PC-9 (cell line): ENCODE measurements at regions of chr6 and their contacts with region 1.

Region 1: DNA sequence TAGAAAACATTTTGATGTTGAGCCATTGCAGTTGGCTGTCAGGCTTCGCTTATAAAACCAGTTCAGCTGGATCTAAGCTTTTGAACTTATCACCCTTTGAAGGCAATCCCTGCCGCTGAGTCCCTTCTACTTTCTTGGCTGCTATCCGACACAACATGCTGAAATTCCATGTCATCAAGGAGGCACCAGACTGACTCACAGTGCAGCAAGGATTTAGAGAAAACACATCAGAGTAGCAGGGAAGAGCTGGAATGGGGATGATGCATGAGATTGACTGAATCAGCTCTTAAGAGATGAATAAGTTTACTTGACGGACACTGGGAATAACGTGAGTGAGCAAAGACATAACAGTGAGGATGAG is 135.1 kb upstream of the MAN1A1 start:
- DNase-seq: peak; percentile 72 to 99
- H3K4me3 ChIP-seq: no peak overlapping the region
- H3K27ac ChIP-seq: peak overlapping the region; percentile 75
- H3K4me1 ChIP-seq: peaks cover 29% of the 10 kb centered on the region
- H3K27me3 ChIP-seq: no peaks in the 10 kb centered on the region
- CTCF ChIP-seq: no peak

Region 2: DNA sequence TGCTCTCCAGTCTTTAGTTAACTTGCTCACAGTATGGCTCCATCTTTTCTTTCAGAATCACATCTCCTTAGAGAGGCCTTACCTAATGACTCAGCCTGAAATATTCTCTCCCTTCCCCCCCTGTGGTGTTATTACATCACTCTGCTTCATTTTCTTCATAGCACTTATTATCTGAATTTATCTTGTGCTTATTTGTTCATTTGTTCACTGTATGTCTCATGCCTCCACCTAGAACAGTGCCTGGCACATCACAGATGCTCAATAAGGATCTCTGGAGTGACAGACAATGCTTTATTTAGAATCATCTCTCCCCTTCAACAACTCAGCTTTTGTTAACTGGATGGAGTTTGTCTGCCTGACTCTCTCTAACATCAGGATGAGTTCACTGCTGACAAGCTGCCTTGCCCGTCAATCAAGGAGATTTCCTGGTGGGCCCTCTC is 38.5 kb before region 1 on chr6:
- CTCF ChIA-PET with region 1: no interaction called
- POLR2A ChIA-PET with region 1: interaction called, 3 read pairs
- intact Hi-C with region 1: loop called (anchors 2 kb)
- DNase-seq: peak; percentile 9 to 72
- H3K4me3 ChIP-seq: peak overlapping the region; percentile 30; the same call in 1 of the 2 replicates
- H3K27ac ChIP-seq: peak overlapping the region; percentile 96
- H3K4me1 ChIP-seq: peaks cover 46% of the 10 kb centered on the region
- H3K27me3 ChIP-seq: no peaks in the 10 kb centered on the region
- CTCF ChIP-seq: no peak

Region 3: DNA sequence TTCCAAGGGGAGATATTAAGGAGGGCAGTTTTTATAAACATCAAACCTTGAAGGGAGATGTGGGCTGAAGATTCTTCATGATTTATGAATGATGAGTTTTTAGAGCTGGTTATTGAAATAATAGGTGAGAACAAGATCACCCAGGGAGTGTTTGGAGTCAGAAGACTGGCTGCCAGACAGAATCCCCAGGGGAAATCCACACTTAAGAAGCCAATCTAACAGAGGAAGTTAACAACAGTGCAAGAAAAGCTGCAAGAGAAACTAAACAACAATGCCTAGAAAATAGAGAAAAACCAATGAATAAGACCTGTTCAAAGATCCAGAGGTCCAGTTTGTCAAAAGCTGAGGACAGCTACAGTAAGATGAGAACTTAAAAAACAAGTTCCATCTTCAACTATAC is 32.8 kb after region 1 on chr6:
- CTCF ChIA-PET with region 1: no interaction called
- POLR2A ChIA-PET with region 1: no interaction called
- intact Hi-C with region 1: no loop called
- DNase-seq: no peak
- H3K4me3 ChIP-seq: no peak overlapping the region
- H3K27ac ChIP-seq: no peak overlapping the region
- H3K4me1 ChIP-seq: no peaks in the 10 kb centered on the region
- H3K27me3 ChIP-seq: no peaks in the 10 kb centered on the region
- CTCF ChIP-seq: no peak

Region 4: GRCh38 chr6:119575721-119576120 is 91.1 kb after region 1 on chr6:
- CTCF ChIA-PET with region 1: no interaction called
- POLR2A ChIA-PET with region 1: no interaction called
- intact Hi-C with region 1: no loop called
- DNase-seq: no peak
- H3K4me3 ChIP-seq: no peak overlapping the region
- H3K27ac ChIP-seq: no peak overlapping the region
- H3K4me1 ChIP-seq: no peaks in the 10 kb centered on the region
- H3K27me3 ChIP-seq: no peaks in the 10 kb centered on the region
- CTCF ChIP-seq: no peak

Region 5: DNA sequence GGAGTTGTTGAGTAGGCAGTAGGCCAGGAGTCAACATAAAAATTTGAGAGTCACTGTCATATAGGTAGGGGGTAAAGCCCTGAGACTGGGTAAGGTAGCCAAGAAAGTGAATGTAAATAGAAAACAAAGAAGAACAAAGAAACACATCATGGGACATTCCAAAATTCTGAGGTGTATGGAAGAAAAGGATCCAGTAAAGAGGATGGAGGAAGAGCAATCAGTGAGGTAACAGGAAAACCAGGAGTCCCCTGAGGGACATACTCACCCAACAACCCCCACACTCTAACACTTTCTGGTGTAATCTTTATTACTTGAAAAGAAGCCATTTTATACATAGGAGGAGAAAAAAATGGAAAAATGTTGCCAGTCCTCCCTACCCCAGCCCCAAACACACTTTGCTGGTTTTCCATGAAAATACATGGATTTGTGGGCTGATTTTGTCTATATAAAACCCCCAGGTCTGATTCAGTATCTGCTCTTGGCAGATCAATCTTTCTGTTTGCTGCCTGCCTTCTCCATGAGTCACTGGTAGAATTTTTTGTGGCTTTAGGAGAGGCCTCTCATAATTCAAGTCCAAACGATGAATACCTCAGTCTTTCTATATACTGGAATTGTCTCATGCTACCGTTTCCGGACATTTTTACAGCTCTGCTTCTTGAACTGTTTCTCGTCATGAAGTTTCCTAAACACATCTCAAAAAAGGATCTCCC is 136.4 kb after region 1 on chr6:
- CTCF ChIA-PET with region 1: no interaction called
- POLR2A ChIA-PET with region 1: no interaction called
- intact Hi-C with region 1: loop called (anchors 1 kb)
- DNase-seq: peak; percentile 37 to 79
- H3K4me3 ChIP-seq: peak overlapping the region; percentile 15; the same call in 1 of the 2 replicates
- H3K27ac ChIP-seq: peak overlapping the region; percentile 78
- H3K4me1 ChIP-seq: peaks cover 23% of the 10 kb centered on the region
- H3K27me3 ChIP-seq: no peaks in the 10 kb centered on the region
- CTCF ChIP-seq: no peak